Activated T-helper 1 cell treated with anti-CD3 and anti-CD28 coated beads, Interleukin-12 subunit alpha, Interleukin-12 subunit beta, Interleukin-2, Interleukin-4 antibody, amounts not matched to agents 30 ng/mL and 10 ng/mL and 1 ng/mL, durations not matched to agents 14 hours and 24 hours and 36 hours (primary cell): ENCODE measurements at regions of chr10 and their contacts with region 1.

Region 1: GRCh38 chr10:128035557-128035973 is 90.7 kb downstream of the MKI67 start:
- DNase-seq: peak; percentile 42
- H3K4me3 Mint-ChIP-seq: no peak overlapping the region
- H3K27ac Mint-ChIP-seq: no peak overlapping the region
- H3K4me1 Mint-ChIP-seq: no peaks in the 10 kb centered on the region
- H3K27me3 Mint-ChIP-seq: no peaks in the 10 kb centered on the region

Region 2: GRCh38 chr10:128047351-128047750 is 11.8 kb after region 1 on chr10:
- intact Hi-C with region 1: loop called (anchors 1 kb)
- DNase-seq: peak; percentile 83
- H3K4me3 Mint-ChIP-seq: peak overlapping the region; percentile 94
- H3K27ac Mint-ChIP-seq: peak overlapping the region; percentile 96
- H3K4me1 Mint-ChIP-seq: peaks cover 49% of the 10 kb centered on the region
- H3K27me3 Mint-ChIP-seq: peaks cover 2% of the 10 kb centered on the region